Activated CD4-positive, alpha-beta T cell treated with anti-CD3 and anti-CD28 coated beads for 36 hours (primary cell): ENCODE measurements at regions of chr13 and their contacts with region 1.

Region 1: GRCh38 chr13:21385710-21386109 is 73.4 kb downstream of the ZDHHC20 start:
- DNase-seq: no peak
- ATAC-seq: no peak
- H3K4me3 Mint-ChIP-seq: no peak overlapping the region
- H3K27ac Mint-ChIP-seq: no peak overlapping the region
- H3K4me1 Mint-ChIP-seq: no peaks in the 10 kb centered on the region
- H3K27me3 Mint-ChIP-seq: no peaks in the 10 kb centered on the region

Region 2: DNA sequence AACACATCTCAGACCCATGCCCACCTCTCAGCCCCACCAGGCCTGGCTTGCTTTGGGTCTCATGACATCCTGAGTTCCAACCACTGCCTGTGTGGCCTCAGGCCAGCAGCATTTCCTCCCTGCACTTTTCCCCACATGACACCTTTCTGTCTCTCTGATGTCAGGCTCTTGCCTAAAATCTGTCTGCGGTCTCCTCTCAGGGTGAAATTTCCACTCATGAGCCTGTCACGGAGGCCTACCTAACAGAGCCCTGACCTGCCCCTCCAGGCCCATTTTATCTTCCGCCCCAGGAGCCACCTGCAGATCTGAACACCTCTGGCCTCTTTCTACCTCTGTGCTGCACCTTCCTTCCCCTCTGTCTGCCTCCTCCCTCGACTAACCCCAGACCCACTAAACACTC is 20.1 kb before region 1 on chr13:
- CTCF ChIA-PET with region 1: no interaction called
- POLR2A ChIA-PET with region 1: no interaction called
- intact Hi-C with region 1: loop called in 1 of 2 experiments (anchors 2 kb)
- DNase-seq: peak; percentile 20
- ATAC-seq: peak; percentile 59
- H3K4me3 Mint-ChIP-seq: no peak overlapping the region
- H3K27ac Mint-ChIP-seq: peak overlapping the region; percentile 48
- H3K4me1 Mint-ChIP-seq: peaks cover 7% of the 10 kb centered on the region
- H3K27me3 Mint-ChIP-seq: no peaks in the 10 kb centered on the region